Left cardiac atrium (tissue), 4 donors: ENCODE measurements at regions of chr11 and their contacts with region 1.

Region 1: DNA sequence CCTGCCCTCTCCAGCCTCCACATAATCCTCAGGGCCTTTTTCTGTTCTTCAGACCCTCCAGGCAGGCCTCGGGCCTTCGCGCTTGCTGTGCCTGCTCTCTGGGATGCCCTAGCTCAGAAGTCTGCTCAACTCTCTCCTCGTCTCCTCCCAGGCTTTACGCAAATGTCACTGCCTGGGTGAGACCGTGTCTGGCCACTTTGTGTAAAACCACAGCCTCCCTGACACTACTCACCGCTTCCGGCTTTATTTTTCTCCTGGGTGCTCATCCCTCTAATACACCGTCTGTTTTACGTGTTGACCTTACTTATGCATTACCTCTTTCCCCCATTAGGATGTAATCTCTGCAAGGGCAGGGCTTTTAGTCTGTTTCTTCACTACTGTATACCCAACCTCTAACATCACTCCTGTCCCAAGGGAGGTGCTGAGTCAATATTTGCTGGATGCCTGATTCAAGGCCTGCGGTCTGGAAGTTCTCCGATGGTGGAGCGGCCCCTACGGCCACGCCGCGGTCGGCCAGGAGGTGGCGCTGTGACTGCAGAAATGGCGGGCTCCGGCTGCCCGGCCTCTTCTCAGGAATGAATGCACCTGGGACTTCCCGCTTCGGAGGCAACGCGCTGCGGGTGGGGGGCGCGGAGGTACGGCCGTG is 58.2 kb upstream of the THY1 start:
- DNase-seq: peak; percentile 81
- ATAC-seq: peak; percentile 84 to 89

Region 2: DNA sequence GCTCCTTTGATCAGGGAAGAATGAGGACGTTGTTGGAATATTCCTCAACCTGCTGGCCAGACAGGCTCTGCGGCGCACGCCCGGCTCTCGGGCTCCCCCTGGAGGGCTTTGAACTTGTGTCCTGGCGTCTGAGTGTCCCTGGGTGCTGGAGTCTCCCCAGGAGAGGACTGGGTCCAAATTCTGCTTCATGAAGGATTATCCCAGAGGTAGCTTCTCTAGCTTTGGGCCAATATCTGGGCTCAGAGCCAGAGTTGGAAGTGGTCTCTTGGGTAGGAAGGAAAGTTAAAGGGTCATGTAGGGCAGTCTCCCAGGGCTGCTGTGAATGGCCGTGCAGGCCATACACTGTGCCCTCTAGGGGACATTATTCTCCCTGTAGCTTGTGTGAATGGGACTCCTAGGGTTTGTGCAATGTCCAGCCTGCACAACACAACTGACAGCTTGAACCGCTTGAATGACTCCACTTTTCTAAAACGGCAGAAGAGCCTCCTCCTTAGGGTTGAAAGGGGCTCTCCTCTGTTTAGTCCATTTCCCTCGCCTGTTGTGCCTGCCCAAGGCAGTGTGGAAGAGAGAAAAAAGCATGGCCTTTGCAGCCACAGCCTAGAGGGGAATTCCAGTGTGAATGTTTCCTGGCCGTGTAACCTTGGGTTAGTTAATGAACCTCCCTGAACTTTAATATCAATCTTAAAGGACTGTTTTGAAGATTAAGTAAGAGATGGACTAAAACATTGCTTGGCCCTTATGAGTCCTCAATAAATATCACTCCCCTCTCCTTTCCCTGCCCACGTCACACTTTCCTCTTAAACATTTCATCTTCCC is 53.0 kb after region 1 on chr11:
- intact Hi-C with region 1: loop called in 1 of 2 experiments (anchors 5 kb)
- DNase-seq: peak; percentile 76
- ATAC-seq: peak; percentile 82 to 91

Region 3: DNA sequence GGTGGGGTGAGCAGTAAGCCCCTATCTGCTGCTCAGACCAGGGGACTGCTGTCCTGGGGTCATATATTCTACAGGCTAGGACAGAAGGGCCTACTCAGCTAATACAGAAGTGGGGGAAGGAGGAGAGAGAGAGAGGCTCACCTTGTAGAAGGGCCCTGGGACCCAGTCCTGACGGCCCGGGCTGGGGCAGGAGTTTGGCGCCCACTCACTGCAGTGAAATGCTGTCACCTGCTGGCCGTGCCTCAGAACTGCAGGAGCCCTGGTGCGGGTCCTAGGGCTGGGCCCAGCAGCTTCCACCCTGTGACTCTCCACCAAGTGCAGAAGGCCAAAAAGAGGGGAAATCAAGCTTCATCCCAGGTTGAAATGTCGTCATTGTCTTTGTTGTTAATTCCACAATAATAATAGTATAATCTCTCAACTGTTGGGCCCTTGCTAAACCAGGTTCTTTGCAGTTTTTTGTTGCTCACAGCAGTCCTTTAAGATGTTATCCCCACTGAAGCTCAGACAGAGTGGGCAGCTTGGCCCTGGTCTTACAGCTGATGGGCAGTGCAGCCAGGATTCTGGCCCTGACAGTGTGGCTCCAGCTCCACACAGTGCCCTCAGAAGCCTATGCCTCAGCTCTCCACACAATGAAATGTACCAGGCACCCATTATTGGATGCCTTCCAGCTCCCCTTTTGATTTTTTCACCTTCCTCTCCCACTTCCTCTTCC is 627.2 kb after region 1 on chr11:
- intact Hi-C with region 1: loop called (anchors 5 to 10 kb)
- DNase-seq: peak; percentile 72
- ATAC-seq: peak; percentile 90 to 93